Prostate gland (tissue), 2 donors: ENCODE measurements at regions of chr1 and their contacts with region 1.

Region 1: GRCh38 chr1:52002038-52002917 is 11.8 kb upstream of the RAB3B start:
- DNase-seq: peak; percentile 88
- H3K4me3 ChIP-seq: no peak overlapping the region
- H3K27ac ChIP-seq: no peak overlapping the region
- H3K4me1 ChIP-seq: no peaks in the 10 kb centered on the region
- H3K27me3 ChIP-seq: no peaks in the 10 kb centered on the region
- CTCF ChIP-seq: peak; percentile 83 to 94 (median 88)
- POLR2A ChIP-seq: no peak

Region 2: GRCh38 chr1:51897699-51898031 is 104.6 kb before region 1 on chr1:
- intact Hi-C with region 1: loop called (anchors 5 kb)
- DNase-seq: no peak
- H3K4me3 ChIP-seq: no peak overlapping the region
- H3K27ac ChIP-seq: no peak overlapping the region
- H3K4me1 ChIP-seq: no peaks in the 10 kb centered on the region
- H3K27me3 ChIP-seq: no peaks in the 10 kb centered on the region
- CTCF ChIP-seq: no peak
- POLR2A ChIP-seq: no peak

Region 3: DNA sequence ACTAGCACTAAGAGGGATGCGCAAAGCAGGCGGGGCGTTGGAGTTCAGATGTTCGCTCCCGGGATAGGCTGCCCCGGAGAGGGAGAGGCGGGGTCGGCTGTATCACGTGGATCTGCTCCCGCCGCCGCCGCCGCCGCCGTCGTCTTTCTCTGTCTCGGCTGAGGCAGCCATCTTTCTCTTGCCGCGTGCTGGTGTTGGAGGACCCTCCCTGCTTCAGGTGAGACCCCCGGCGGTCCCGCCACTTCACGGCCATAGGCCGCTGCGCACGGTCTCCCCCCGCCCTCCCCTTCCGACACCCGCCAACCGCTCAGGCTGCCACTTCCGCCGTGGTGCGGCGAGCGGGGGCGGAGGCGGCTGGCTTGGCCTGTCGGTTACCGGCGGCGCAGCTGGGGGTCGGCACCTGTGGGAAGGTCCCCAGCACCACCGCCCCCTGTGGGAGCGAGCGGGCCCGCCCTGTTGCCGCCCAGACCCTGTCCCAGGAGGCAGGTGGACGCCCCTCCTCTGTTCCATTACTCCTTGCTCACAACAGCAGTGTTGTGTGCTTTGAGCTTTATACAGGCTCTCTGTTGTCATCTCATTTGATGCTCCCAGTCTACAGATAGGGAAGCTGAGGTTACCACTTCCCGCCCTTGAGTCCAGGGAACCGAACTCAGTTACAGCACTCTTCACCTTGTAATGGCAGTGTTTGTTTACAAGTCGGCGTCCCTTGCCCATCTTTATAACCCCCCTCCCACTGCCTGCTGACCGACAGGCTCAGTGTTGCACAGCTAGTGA is 54.1 kb after region 1 on chr1 and contains the start of gene BTF3L4:
- intact Hi-C with region 1: no loop called
- DNase-seq: peak; percentile 97
- H3K4me3 ChIP-seq: peak within 1 kb of the TSS; percentile 79 to 86
- H3K27ac ChIP-seq: peak within 1 kb of the TSS; percentile 84 to 88
- H3K4me1 ChIP-seq: peaks cover 6% of the 10 kb centered on the region
- H3K27me3 ChIP-seq: no peaks in the 10 kb centered on the region
- CTCF ChIP-seq: peak in 1 of 4 experiments; percentile 10
- POLR2A ChIP-seq: peak; percentile 69
- total RNA-seq, gene BTF3L4: 34.7 to 39.0 TPM